ENCODE measurements at regions of chr6 and their contacts with region 1.

Region 1: DNA sequence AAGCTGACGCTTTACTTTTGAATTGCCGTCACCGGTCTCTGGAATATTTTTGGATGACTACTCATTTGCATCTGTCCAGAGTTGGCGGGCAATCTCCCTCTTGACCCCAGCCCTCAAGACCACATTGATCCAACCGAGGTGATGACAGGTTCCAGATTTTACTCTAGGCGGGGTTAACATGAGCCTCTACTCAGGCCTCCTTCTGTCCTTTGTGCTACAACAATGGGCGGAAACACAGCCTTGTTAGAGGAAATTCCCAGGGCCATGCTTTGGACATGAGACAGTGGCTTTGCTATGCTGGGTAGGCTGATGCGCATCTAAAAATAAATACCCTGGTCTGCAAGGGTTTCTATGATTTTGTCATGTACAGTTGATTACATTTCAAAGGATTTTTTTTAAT is 27.0 kb upstream of the ADGRF5 start:
- DNase-seq: no peak
- ATAC-seq: peak; percentile 60

Region 2: GRCh38 chr6:46909371-46909770 is 39.3 kb before region 1 on chr6:
- intact Hi-C with region 1: no loop called
- DNase-seq: no peak
- ATAC-seq: no peak

Region 3: DNA sequence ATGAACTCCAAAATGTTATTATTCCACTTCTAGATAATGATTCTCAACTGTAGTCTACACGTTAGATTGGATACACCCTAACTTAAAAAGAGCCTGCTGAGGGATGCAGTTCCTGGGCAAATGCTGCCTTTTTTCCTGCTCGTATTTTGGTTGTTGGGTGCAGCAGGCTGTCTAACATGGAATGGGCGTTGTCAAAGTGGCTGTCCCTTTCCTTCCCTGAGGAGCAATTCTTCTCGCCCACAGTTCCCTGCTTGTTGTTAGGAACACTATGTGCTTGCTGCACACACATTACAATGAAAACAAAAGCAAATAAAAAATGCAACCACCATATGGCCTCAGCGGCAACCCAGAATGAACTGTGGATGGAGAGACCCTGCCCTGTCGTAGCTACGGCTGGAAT is 25.2 kb before region 1 on chr6:
- intact Hi-C with region 1: loop called (anchors 1 kb)
- DNase-seq: no peak
- ATAC-seq: no peak